Activated CD4-positive, alpha-beta T cell treated with anti-CD3 and anti-CD28 coated beads, Interleukin-2, amount 10 ng/mL, durations not matched to agents 24 days and 14 days (primary cell): ENCODE measurements at regions of chr4 and their contacts with region 1.

Region 1: GRCh38 chr4:64781737-64782326 is 372.6 kb upstream of the TECRL start:
- DNase-seq: no peak
- H3K4me3 Mint-ChIP-seq: no peak overlapping the region
- H3K27ac Mint-ChIP-seq: no peak overlapping the region
- H3K4me1 Mint-ChIP-seq: no peaks in the 10 kb centered on the region
- H3K27me3 Mint-ChIP-seq: no peaks in the 10 kb centered on the region

Region 2: GRCh38 chr4:64814616-64815015 is 32.8 kb after region 1 on chr4:
- intact Hi-C with region 1: no loop called
- DNase-seq: no peak
- H3K4me3 Mint-ChIP-seq: no peak overlapping the region
- H3K27ac Mint-ChIP-seq: no peak overlapping the region
- H3K4me1 Mint-ChIP-seq: no peaks in the 10 kb centered on the region
- H3K27me3 Mint-ChIP-seq: no peaks in the 10 kb centered on the region

Region 3: DNA sequence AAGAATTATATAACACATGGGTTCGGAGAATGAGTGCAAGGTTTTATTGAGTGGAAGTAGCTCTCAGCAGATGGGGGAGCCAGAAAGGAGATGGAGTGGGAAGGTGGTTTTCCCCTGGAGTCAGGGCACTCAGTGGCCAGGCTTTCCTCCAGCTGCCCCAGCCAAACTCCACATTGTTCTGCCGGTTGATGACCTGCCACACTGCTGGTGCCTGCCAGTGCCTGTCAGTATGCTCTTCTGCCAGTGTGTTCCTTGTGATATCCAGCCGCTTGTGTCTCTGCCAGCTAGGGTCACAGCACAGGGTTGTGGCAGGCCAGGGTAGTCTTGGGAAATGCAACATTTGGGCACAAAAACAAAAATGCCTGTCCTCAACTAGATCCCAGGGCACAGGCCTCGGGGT is 232.2 kb after region 1 on chr4:
- intact Hi-C with region 1: loop called (anchors 10 kb)
- DNase-seq: no peak
- H3K4me3 Mint-ChIP-seq: no peak overlapping the region
- H3K27ac Mint-ChIP-seq: no peak overlapping the region
- H3K4me1 Mint-ChIP-seq: no peaks in the 10 kb centered on the region
- H3K27me3 Mint-ChIP-seq: no peaks in the 10 kb centered on the region